ENCODE measurements at regions of chr3 and their contacts with region 1.

Region 1: GRCh38 chr3:172332256-172333041 is 115.8 kb downstream of the GHSR start:
- DNase-seq: peak in 1 of 2 experiments; percentile 78
- H3K4me3 ChIP-seq: no peak overlapping the region
- H3K27ac ChIP-seq: no peak overlapping the region
- H3K4me1 ChIP-seq: no peaks in the 10 kb centered on the region
- H3K27me3 ChIP-seq: no peaks in the 10 kb centered on the region
- CTCF ChIP-seq: peak; percentile 71 to 92 (median 77)
- EP300 ChIP-seq: no peak
- POLR2A ChIP-seq: no peak
- RAD21 ChIP-seq: peak; percentile 62 to 71

Region 2: DNA sequence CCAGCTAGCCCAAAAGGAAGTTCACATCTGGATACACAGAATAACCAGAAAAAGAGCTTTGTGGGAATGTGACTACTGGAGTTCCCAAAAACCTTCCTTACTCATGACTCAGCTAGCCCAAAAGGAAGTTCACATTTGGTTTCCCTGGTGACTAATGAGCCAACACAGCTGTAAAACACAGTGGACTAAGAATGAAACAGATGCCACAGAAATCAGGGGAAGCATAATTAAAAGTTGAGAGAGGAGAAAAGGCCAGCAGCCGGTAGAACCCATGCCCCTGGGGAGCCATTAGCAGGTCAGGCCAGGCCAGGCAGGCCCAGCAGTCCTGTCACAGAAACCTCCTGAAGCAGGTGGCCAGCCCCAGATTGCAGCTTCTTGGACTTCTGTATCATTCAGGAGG is 14.5 kb before region 1 on chr3:
- CTCF ChIA-PET with region 1: interaction called, 24 read pairs
- POLR2A ChIA-PET with region 1: interaction called, 4 read pairs
- DNase-seq: no peak
- H3K4me3 ChIP-seq: no peak overlapping the region
- H3K27ac ChIP-seq: no peak overlapping the region
- H3K4me1 ChIP-seq: peaks cover 0 to 9% (median 0%) of the 10 kb centered on the region in 4 experiments; a peak in 1 of 7 replicates
- H3K27me3 ChIP-seq: no peaks in the 10 kb centered on the region
- CTCF ChIP-seq: no peak
- EP300 ChIP-seq: no peak
- POLR2A ChIP-seq: no peak
- RAD21 ChIP-seq: no peak

Region 3: GRCh38 chr3:172347895-172348680 is 15.6 kb after region 1 on chr3:
- CTCF ChIA-PET with region 1: interaction called, 26 read pairs
- POLR2A ChIA-PET with region 1: interaction called, 3 read pairs
- DNase-seq: no peak
- H3K4me3 ChIP-seq: no peak overlapping the region
- H3K27ac ChIP-seq: no peak overlapping the region
- H3K4me1 ChIP-seq: no peaks in the 10 kb centered on the region
- H3K27me3 ChIP-seq: no peaks in the 10 kb centered on the region
- CTCF ChIP-seq: no peak
- EP300 ChIP-seq: no peak
- POLR2A ChIP-seq: no peak
- RAD21 ChIP-seq: no peak